ENCODE measurements at regions of chr2 and their contacts with region 1.

Region 1: DNA sequence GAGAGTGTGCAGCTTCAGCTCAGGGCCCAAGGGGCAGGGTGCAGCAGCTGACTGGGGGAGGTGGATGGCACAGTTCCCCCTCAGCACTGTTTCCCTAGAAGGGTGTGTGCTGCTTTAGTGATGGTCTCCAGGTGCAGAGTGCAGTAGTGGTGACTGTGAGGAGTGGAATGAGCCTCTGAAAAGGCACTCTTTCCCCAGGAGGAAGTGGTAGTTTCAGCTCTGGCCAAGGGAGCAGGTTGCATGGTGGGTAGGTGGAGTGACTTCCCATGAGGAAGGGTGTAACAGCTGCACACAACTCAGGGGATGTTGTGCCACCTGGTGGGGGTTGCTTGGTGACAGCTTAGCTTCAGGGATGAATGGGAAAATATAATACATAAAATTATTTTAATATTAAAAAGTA is 251.5 kb upstream of the NXPH2 start:
- DNase-seq: peak; percentile 1
- ATAC-seq: peak; percentile 77
- H3K4me3 ChIP-seq: no peak overlapping the region
- H3K27ac ChIP-seq: no peak overlapping the region
- H3K4me1 ChIP-seq: no peaks in the 10 kb centered on the region
- H3K27me3 ChIP-seq: no peaks in the 10 kb centered on the region
- CTCF ChIP-seq: peak; percentile 6 to 30 (median 13); a peak in 2 of 6 replicates
- EP300 ChIP-seq: no peak
- POLR2A ChIP-seq: no peak
- RAD21 ChIP-seq: 0 out of 2 replicates have a peak, but pooled peaks have one; percentile 27

Region 2: DNA sequence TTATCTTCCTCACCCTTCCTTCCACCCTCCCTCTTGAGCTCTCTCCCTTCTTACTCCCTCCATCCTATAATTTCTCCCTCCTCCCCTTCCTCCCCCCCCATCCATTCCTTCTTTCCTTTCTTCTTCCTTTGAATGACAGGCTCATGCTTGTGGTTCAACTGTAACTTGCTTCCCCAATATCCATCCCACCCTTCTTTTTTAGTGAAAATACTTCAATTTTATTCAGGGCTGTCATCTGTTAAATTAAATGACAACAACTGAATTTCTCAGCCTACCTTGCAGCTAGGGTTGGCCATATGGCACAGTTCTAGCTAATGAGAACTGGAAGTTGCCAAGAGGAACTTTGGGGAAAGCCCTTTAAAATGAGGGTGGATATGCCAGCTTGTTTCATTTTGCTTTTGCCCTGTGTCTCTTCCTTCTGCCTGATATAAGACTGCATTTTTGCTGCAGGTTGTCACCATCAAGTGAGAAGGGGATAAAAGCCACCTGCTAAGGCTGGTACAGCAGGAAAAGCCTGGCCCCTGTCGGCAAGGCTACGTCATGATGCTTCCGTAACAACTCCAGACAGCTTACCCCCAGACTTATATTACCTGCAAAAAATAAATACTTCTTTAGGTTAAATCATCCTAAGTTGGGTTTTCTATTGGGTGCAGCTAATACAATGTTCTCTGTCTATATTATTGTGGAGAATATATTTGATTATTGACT is 373.4 kb before region 1 on chr2:
- CTCF ChIA-PET with region 1: no interaction called
- POLR2A ChIA-PET with region 1: no interaction called
- RAD21 ChIA-PET with region 1: no interaction called
- SMC1A ChIA-PET with region 1: no interaction called
- in situ Hi-C with region 1: no loop called
- intact Hi-C with region 1: no loop called
- DNase-seq: no peak
- ATAC-seq: no peak
- H3K4me3 ChIP-seq: no peak overlapping the region
- H3K27ac ChIP-seq: no peak overlapping the region
- H3K4me1 ChIP-seq: no peaks in the 10 kb centered on the region
- H3K27me3 ChIP-seq: no peaks in the 10 kb centered on the region; a peak in 1 of 4 replicates
- CTCF ChIP-seq: no peak
- EP300 ChIP-seq: no peak
- POLR2A ChIP-seq: no peak
- RAD21 ChIP-seq: no peak

Region 3: DNA sequence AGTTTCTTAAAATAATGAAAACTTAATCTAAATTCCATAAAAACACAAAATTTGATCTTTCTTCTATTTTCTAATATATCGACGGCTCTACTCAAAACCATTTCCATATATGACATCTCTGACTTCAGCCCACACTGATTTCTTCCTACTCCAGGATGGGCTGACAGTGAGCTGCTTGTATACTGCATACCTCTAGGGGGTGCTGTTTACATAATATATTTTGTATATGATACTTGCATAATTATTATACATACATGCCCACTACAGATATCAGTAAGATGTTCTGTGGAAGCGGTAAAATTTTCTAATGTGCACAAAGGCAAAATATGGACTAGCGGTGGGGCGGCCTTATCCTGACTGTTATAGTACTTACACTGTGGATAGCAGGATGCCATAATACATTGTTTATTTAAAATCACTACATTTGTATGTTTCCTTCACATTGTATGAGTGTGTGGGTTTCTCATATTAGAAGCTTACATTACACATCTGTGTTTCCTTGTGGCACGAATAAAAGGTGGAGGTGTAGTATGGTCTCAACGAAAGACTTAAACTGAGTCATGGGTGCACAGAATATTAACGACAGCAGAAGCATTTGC is 185.4 kb before region 1 on chr2:
- CTCF ChIA-PET with region 1: interaction called, 5 read pairs
- POLR2A ChIA-PET with region 1: no interaction called
- RAD21 ChIA-PET with region 1: interaction called, 8 read pairs
- SMC1A ChIA-PET with region 1: interaction called, 8 read pairs
- in situ Hi-C with region 1: no loop called
- intact Hi-C with region 1: loop called (anchors 2 kb)
- DNase-seq: no peak
- ATAC-seq: peak; percentile 92
- H3K4me3 ChIP-seq: no peak overlapping the region
- H3K27ac ChIP-seq: no peak overlapping the region
- H3K4me1 ChIP-seq: no peaks in the 10 kb centered on the region
- H3K27me3 ChIP-seq: no peaks in the 10 kb centered on the region
- CTCF ChIP-seq: peak; percentile 57 to 61 (median 60); a peak in 5 of 6 replicates
- EP300 ChIP-seq: no peak
- POLR2A ChIP-seq: no peak
- RAD21 ChIP-seq: peak; percentile 50

Region 4: DNA sequence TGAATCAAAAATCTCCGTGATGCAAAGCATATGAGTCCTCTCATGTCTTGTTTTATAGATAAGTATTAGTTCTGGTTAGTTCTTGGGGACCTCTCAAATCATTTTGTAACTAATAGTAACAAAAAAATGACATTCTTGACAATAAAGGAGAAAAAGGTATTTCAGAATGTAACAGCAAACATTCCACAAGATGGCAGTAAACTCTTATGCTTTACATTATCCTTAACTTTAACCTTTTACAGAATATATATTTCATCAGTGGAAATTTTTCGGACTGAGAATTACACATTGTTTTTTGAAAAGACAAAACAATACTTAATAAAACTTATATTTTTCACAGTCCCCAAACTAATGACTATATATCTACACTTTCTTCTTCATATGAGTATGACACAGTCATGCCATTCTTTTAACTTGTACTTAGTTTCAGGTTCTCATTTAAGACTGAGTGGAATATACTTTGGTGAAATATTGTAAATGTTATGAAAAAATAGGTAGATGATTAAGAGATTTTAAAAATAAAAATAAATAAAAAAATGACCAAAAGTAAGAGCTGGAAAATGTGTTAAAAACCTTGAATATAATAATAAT is 108.7 kb before region 1 on chr2:
- CTCF ChIA-PET with region 1: interaction called, 7 read pairs
- POLR2A ChIA-PET with region 1: no interaction called
- RAD21 ChIA-PET with region 1: no interaction called
- SMC1A ChIA-PET with region 1: interaction called, 3 read pairs
- in situ Hi-C with region 1: no loop called
- intact Hi-C with region 1: loop called (anchors 1 kb)
- DNase-seq: no peak
- ATAC-seq: 0 out of 3 replicates have a peak, but pooled peaks have one; percentile 20
- H3K4me3 ChIP-seq: no peak overlapping the region
- H3K27ac ChIP-seq: no peak overlapping the region
- H3K4me1 ChIP-seq: no peaks in the 10 kb centered on the region
- H3K27me3 ChIP-seq: no peaks in the 10 kb centered on the region
- CTCF ChIP-seq: peak in 1 of 3 experiments; percentile 25; a peak in 2 of 6 replicates
- EP300 ChIP-seq: no peak
- POLR2A ChIP-seq: no peak
- RAD21 ChIP-seq: peak; percentile 39

Region 5: GRCh38 chr2:139018252-139018651 is 13.5 kb before region 1 on chr2:
- CTCF ChIA-PET with region 1: no interaction called
- POLR2A ChIA-PET with region 1: no interaction called
- RAD21 ChIA-PET with region 1: no interaction called
- SMC1A ChIA-PET with region 1: no interaction called
- in situ Hi-C with region 1: no loop called
- intact Hi-C with region 1: no loop called
- DNase-seq: no peak
- ATAC-seq: no peak
- H3K4me3 ChIP-seq: no peak overlapping the region
- H3K27ac ChIP-seq: no peak overlapping the region
- H3K4me1 ChIP-seq: no peaks in the 10 kb centered on the region
- H3K27me3 ChIP-seq: no peaks in the 10 kb centered on the region
- CTCF ChIP-seq: no peak
- EP300 ChIP-seq: no peak
- POLR2A ChIP-seq: no peak
- RAD21 ChIP-seq: no peak

Measured in GM12878 (cell line).